ENCODE measurements at regions of chrX and their contacts with region 1.

Region 1: GRCh38 chrX:107823456-107823855 is 2.2 kb upstream of the MID2 start:
- DNase-seq: no peak
- ATAC-seq: no peak
- H3K4me3 ChIP-seq: no peak overlapping the region
- H3K27ac ChIP-seq: no peak overlapping the region
- H3K4me1 ChIP-seq: peaks cover 10% of the 10 kb centered on the region
- H3K27me3 ChIP-seq: no peaks in the 10 kb centered on the region
- CTCF ChIP-seq: no peak

Region 2: GRCh38 chrX:107787827-107788226 is 35.6 kb before region 1 on chrX:
- CTCF ChIA-PET with region 1: no interaction called
- POLR2A ChIA-PET with region 1: interaction called, 13 read pairs
- in situ Hi-C with region 1: no loop called
- intact Hi-C with region 1: no loop called
- DNase-seq: no peak
- ATAC-seq: no peak
- H3K4me3 ChIP-seq: no peak overlapping the region
- H3K27ac ChIP-seq: no peak overlapping the region
- H3K4me1 ChIP-seq: no peaks in the 10 kb centered on the region
- H3K27me3 ChIP-seq: peaks cover 6% of the 10 kb centered on the region; the same call in 1 of the 2 replicates
- CTCF ChIP-seq: no peak

Region 3: GRCh38 chrX:108090491-108091265 is 267.2 kb after region 1 on chrX:
- CTCF ChIA-PET with region 1: no interaction called
- POLR2A ChIA-PET with region 1: no interaction called
- in situ Hi-C with region 1: no loop called
- intact Hi-C with region 1: no loop called
- DNase-seq: no peak
- ATAC-seq: no peak
- H3K4me3 ChIP-seq: peak overlapping the region; percentile 93 to 99
- H3K27ac ChIP-seq: peak overlapping the region; percentile 99
- H3K4me1 ChIP-seq: peaks cover 9% of the 10 kb centered on the region; the same call in 1 of the 2 replicates
- H3K27me3 ChIP-seq: no peaks in the 10 kb centered on the region
- CTCF ChIP-seq: no peak

Measured in Panc1 (cell line).